ENCODE measurements at regions of chr19 and their contacts with region 1.

Region 1: GRCh38 chr19:7680606-7681339 is at the start of gene TRAPPC5:
- DNase-seq: peak; percentile 63 to 94 (median 88)

Region 2: DNA sequence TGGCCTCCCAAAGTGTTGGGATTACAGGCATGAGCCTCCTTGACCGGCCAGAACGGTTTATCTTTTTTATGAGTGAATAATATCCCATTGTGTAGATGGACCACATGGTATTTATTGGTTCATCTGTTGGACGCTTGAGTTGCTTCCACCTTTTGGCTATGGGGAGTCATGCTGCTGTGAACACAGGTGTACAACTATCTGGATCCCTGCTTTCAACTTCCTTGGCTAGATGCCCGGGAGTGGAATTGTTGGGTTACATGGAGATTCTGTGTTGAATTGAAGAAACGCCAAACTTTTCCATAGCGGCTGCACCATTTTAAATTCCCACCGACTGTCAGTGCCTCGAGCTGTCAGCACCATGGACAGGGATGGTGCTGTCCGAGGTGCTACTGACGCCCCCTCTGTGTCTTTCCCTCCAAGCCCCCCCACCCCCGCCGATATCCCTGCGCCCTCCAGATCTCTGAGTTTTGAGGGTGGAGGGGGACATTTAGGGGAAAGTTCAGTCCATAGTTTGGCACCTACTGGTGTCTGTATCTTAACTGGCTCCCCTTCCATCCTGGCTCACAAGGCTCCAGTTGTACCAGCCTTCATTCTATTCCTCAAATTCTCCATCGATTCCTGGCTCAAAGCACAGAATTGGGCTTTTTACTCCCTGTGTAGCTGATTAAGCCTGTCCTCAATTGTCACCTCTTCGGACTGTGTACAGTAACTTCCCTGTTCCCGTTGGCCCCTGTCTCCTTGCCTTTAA is 118.0 kb before region 1 on chr19:
- intact Hi-C with region 1: loop called (anchors 5 kb)
- DNase-seq: no peak

Region 3: DNA sequence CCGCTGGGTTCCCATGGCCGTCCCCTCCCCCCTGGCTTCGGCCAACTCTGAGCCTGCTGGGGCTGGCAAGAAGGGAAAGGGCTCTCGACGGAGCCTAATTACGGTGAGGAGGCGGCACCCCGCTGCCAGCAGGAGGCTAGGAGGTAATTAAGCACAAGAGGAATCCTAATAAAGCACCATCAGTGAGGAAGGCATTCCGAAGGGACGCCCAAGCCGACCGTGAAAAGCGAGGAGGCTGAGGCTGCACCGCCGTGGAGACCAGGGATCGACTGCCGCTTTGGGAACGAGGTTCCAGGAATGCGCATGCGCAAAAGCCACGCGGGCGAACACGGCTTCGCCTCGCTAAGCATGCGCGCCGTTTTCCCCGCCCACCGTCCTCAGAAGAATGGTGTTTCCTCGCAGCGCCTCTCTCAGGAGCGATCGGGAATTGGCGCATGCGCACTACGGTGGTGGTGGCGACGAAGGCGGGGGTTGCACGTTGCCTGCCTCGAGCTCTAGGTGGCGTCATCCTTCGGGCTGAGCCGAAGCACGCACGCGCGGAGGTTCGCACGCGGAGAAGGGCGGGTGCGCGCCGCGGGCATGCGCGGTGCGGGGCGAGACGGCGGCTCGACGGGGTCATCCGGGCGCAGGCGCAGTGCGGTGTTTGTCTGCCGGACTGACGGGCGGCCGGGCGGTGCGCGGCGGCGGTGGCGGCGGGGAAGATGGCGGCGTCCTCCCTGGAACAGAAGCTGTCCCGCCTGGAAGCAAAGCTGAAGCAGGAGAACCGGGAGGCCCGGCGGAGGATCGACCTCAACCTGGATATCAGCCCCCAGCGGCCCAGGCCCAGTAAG is 222.7 kb after region 1 on chr19 and contains the start of gene MAP2K7:
- intact Hi-C with region 1: loop called (anchors 2 kb)
- DNase-seq: peak; percentile 95 to 100 (median 99)

Measured in head of caudate nucleus (tissue), 42 donors.